ENCODE measurements at regions of chr16 and their contacts with region 1.

Region 1: GRCh38 chr16:72832621-72833248 is 215.2 kb downstream of the ZFHX3 start:
- DNase-seq: no peak
- H3K4me3 ChIP-seq: no peak overlapping the region
- H3K27ac ChIP-seq: no peak overlapping the region
- H3K27me3 ChIP-seq: no peaks in the 10 kb centered on the region
- CTCF ChIP-seq: peak; percentile 100

Region 2: DNA sequence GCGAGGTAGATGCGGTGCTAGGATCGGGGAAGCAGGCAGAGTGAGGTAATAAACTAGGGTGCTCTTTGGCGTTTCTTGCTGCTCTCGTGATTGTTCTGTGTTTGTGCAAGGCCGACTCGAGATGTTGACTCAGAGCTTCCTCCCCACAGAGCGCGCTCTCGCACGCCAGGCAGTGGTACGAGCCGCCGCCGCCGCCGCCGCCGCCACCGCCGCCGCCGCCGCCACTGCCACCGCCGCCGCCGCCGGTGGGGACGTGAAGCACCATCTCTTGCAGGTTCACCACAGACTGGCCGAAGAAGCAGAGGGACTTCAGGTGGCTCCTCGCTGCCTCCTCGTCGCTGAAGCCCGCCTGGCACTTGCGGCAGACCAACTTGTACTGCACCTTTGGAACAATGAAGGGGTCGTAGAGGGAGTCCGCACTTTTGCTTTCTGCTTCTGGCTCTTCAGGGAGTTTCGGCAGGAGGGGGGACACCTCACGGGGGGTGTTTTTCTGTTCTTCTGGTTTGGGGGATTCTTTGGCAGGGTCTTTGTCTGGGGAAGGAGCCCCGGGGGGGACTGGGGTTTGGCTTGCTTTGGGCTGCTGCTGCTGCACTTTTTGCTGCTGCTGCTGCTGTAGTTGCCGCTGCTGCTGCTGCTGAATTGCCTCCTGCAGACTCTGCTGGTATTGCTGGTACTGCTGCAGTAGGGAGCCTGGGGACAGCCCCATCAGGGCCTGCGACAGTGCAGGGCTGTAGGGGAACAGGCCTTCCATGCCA is 45.0 kb before region 1 on chr16:
- CTCF ChIA-PET with region 1: interaction called, 37 read pairs
- POLR2A ChIA-PET with region 1: interaction called, 3 read pairs
- DNase-seq: peak; percentile 56
- H3K4me3 ChIP-seq: peak overlapping the region; percentile 67
- H3K27ac ChIP-seq: peak overlapping the region; percentile 88
- H3K27me3 ChIP-seq: no peaks in the 10 kb centered on the region
- CTCF ChIP-seq: no peak

Region 3: DNA sequence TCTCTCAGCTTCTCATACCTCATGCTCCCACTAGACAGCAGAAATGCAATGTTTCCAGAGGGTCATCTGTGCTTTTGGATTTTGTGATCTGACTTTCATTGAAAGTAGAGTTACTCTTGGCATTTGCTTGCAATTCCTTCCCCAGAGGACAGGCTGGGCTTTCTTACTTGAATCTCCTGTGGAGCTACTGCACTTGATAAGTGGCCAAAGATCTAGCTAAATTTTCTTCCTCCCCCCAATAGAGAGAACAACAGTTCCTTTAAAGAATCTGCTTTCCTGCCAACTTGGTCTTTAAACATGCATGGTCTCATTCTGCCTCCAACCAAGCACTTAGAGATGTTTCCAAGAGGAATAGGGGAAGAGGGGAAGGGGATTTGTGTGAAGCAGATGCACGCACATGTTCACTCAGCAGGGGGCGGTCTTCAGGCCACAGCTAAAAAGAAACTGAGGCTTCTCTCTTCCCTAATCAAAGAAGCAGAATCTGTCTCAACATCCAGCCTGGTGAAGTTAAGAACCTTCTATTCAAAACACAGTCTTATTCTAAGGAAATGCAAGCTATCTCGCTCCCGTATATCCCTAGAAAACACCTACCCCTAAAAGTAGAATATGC is 14.4 kb before region 1 on chr16:
- CTCF ChIA-PET with region 1: interaction called, 54 read pairs
- POLR2A ChIA-PET with region 1: no interaction called
- DNase-seq: no peak
- H3K4me3 ChIP-seq: no peak overlapping the region
- H3K27ac ChIP-seq: no peak overlapping the region
- H3K27me3 ChIP-seq: no peaks in the 10 kb centered on the region
- CTCF ChIP-seq: no peak

Region 4: DNA sequence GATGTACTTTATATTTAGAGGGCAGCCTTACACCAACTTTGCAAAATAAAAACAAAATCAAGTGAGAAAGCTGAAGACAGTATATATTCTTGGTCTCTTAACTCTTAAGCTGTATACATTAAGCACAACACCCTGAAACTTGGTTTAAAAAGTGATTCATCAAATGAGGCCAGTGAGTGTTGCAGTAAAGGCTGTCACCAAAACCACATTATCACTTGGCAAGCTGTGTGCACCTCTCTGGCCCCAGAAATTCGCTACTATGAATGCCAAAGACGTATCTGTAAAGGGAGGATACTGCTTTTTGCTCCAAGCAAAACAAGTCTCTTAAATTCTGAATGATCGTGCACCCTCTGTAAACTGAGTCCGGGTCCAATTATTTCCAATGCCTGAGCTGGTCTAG is 51.3 kb after region 1 on chr16:
- CTCF ChIA-PET with region 1: interaction called, 22 read pairs
- POLR2A ChIA-PET with region 1: no interaction called
- DNase-seq: no peak
- H3K4me3 ChIP-seq: no peak overlapping the region
- H3K27ac ChIP-seq: no peak overlapping the region
- H3K27me3 ChIP-seq: no peaks in the 10 kb centered on the region
- CTCF ChIP-seq: no peak

Region 5: GRCh38 chr16:72938795-72939164 is 106.0 kb after region 1 on chr16:
- CTCF ChIA-PET with region 1: interaction called, 16 read pairs
- POLR2A ChIA-PET with region 1: no interaction called
- DNase-seq: peak; percentile 23
- H3K4me3 ChIP-seq: 0 out of 2 replicates have a peak overlapping the region, but pooled peaks have one; percentile 20
- H3K27ac ChIP-seq: peak overlapping the region; percentile 80
- H3K27me3 ChIP-seq: no peaks in the 10 kb centered on the region
- CTCF ChIP-seq: no peak

Region 6: GRCh38 chr16:73047518-73048291 is 215.0 kb after region 1 on chr16 and contains the start of gene ZFHX3:
- CTCF ChIA-PET with region 1: interaction called, 55 read pairs
- POLR2A ChIA-PET with region 1: no interaction called
- DNase-seq: no peak
- H3K4me3 ChIP-seq: peak within 1 kb of the TSS; percentile 68
- H3K27ac ChIP-seq: peak within 1 kb of the TSS; percentile 75
- H3K27me3 ChIP-seq: no peaks in the 10 kb centered on the region
- CTCF ChIP-seq: no peak
- polyA plus RNA-seq, gene ZFHX3: 3.3 and 4.2 TPM in 2 replicates

Region 7: GRCh38 chr16:73202161-73202729 is 369.5 kb after region 1 on chr16:
- CTCF ChIA-PET with region 1: interaction called, 11 read pairs
- POLR2A ChIA-PET with region 1: no interaction called
- DNase-seq: peak; percentile 93
- H3K4me3 ChIP-seq: no peak overlapping the region
- H3K27ac ChIP-seq: peak overlapping the region; percentile 72
- H3K27me3 ChIP-seq: no peaks in the 10 kb centered on the region
- CTCF ChIP-seq: no peak